Spleen (tissue), 13 donors: ENCODE measurements at regions of chr3 and their contacts with region 1.

Region 1: DNA sequence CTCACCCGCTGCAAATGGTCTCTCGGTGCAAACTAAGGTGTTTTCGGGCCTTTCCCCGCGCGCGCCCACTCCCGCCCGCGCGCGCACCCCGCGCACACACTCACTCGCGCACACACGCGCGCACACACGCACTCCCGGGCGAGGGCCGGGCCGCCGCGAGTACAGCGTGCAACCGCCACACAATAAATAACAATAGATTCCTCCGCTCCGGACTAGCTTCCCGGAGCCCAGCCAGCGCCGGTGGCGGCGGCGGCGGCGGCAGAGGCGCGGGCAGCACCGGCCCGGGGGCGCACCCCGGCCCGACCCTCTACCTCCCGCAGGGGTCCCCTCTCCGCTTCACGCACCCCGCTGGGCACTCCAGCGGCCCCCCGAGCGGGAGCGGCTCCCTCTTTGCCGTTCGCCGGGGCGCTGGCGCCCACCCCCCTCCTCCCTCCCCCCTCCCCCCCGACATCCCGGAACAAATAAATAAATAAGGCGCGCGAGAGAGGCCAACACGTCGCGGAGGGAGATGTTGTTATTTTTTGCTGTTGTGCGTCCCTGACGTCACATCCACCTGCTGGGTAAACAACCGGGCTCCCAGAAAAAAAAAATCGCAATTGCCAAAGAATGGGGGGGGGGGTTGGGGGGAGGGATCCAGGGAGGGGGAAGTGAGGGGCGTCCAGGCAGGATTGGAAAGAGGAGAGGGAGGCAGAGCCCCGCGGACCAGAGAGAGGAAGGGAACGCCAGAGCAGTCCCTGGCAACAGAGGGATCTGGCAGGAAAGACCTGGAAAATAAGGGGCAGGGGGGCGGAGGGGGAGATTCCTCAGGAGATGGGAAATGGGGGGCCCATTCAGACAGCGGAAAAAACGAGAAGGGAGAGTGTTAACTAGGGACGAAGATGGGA is at the start of gene FOXP1:
- DNase-seq: peak; percentile 92
- H3K4me3 ChIP-seq: peak within 1 kb of the TSS; percentile 71 to 90 (median 80)
- H3K27ac ChIP-seq: peak within 1 kb of the TSS; percentile 94 to 98 (median 96)
- H3K4me1 ChIP-seq: peaks cover 21 to 64% (median 47%) of the 10 kb centered on the region in 6 donors
- H3K27me3 ChIP-seq: peaks cover 0 to 18% (median 0%) of the 10 kb centered on the region in 7 donors
- CTCF ChIP-seq: no peak
- POLR2A ChIP-seq: peak in 1 of 3 donors; percentile 29
- total RNA-seq, gene FOXP1: 134 to 202 (median 166) TPM

Region 2: DNA sequence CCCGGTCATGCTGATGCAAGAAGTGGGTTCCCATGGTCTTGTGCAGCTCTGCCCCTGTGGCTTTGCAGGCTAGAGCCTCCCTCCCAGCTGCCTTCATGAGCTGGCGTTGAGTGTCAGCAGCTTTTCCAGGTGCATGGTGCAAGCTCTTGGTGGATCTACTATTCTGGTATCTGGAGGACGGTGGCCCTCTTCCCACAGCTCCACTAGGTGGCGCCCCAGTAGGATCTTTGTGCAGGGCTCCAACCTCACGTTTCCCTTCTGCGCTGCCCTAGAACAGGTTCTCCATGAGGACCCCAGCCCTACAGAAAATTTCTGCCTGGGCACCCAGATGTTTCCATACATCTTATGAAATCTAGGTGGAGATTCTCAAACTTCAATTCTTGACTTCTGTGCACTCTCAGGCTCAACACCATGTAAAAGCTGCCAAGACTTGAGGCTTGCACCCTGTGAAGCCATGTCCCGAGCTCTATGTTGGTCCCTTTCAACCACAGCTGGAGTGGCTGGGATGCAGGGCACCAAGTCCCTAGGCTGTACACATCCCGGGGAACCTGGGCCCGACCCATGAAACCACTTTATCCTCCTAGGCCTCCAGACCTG is 1033.0 kb before region 1 on chr3:
- intact Hi-C with region 1: loop called (anchors 5 kb)
- DNase-seq: peak; percentile 87
- H3K4me3 ChIP-seq: no peak overlapping the region
- H3K27ac ChIP-seq: no peak overlapping the region
- H3K4me1 ChIP-seq: no peaks in the 10 kb centered on the region
- H3K27me3 ChIP-seq: no peaks in the 10 kb centered on the region
- CTCF ChIP-seq: peak; percentile 25 to 86 (median 65)
- POLR2A ChIP-seq: no peak

Region 3: GRCh38 chr3:70716832-70717231 is 867.0 kb before region 1 on chr3:
- intact Hi-C with region 1: loop called (anchors 10 kb)
- DNase-seq: no peak
- H3K4me3 ChIP-seq: no peak overlapping the region
- H3K27ac ChIP-seq: no peak overlapping the region
- H3K4me1 ChIP-seq: peaks cover 0 to 7% (median 2%) of the 10 kb centered on the region in 6 donors
- H3K27me3 ChIP-seq: no peaks in the 10 kb centered on the region
- CTCF ChIP-seq: peak in 6 of 11 experiments; percentile 12 to 36 (median 29)
- POLR2A ChIP-seq: no peak

Region 4: GRCh38 chr3:71006810-71007785 is 576.7 kb before region 1 on chr3:
- intact Hi-C with region 1: loop called (anchors 5 kb)
- DNase-seq: no peak
- H3K4me3 ChIP-seq: no peak overlapping the region
- H3K27ac ChIP-seq: peak overlapping the region in 3 of 8 donors; percentile 5 to 43 (median 42)
- H3K4me1 ChIP-seq: peaks cover 25 to 80% (median 48%) of the 10 kb centered on the region in 6 donors
- H3K27me3 ChIP-seq: no peaks in the 10 kb centered on the region
- CTCF ChIP-seq: peak in 9 of 11 experiments; percentile 11 to 57 (median 41)
- POLR2A ChIP-seq: no peak

Region 5: GRCh38 chr3:71305231-71306206 is 278.3 kb before region 1 on chr3:
- intact Hi-C with region 1: loop called (anchors 10 kb)
- DNase-seq: peak; percentile 73
- H3K4me3 ChIP-seq: peak overlapping the region; percentile 8 to 62 (median 33)
- H3K27ac ChIP-seq: peak overlapping the region; percentile 49 to 82 (median 76)
- H3K4me1 ChIP-seq: peaks cover 9 to 94% (median 47%) of the 10 kb centered on the region in 6 donors
- H3K27me3 ChIP-seq: no peaks in the 10 kb centered on the region
- CTCF ChIP-seq: no peak
- POLR2A ChIP-seq: no peak